Common myeloid progenitor, CD34-positive (primary cell): ENCODE measurements at regions of chr3 and their contacts with region 1.

Region 1: DNA sequence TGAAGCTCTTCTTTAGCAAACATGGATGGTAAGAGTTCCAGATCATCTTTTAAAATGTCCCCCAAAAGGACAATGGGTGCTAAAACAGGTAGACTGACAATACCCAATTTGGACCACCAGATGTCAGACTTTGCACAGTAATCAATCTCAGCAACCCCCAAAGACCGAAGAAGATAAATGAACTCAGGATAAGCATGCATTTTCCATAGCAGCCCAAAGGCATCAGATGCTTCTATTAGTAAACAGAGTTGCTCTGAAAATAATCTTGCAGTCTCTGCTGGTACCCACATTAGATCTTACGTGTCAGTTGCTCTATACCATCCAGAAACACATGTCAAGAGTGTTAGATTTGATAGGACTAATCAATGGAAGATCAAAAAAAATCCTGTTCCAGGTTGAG is 20.6 kb downstream of the MYH15 start:
- DNase-seq: peak; percentile 64 to 84 (median 75)
- H3K4me3 ChIP-seq: no peak overlapping the region
- H3K27ac ChIP-seq: no peak overlapping the region
- H3K4me1 ChIP-seq: peaks cover 0 to 9% (median 1%) of the 10 kb centered on the region in 4 experiments
- H3K27me3 ChIP-seq: no peaks in the 10 kb centered on the region

Region 2: GRCh38 chr3:108342837-108343478 is 146.8 kb before region 1 on chr3:
- CTCF ChIA-PET with region 1: no interaction called
- POLR2A ChIA-PET with region 1: no interaction called
- DNase-seq: no peak
- H3K4me3 ChIP-seq: no peak overlapping the region
- H3K27ac ChIP-seq: no peak overlapping the region
- H3K4me1 ChIP-seq: peaks cover 0 to 8% (median 1%) of the 10 kb centered on the region in 4 experiments
- H3K27me3 ChIP-seq: no peaks in the 10 kb centered on the region

Region 3: DNA sequence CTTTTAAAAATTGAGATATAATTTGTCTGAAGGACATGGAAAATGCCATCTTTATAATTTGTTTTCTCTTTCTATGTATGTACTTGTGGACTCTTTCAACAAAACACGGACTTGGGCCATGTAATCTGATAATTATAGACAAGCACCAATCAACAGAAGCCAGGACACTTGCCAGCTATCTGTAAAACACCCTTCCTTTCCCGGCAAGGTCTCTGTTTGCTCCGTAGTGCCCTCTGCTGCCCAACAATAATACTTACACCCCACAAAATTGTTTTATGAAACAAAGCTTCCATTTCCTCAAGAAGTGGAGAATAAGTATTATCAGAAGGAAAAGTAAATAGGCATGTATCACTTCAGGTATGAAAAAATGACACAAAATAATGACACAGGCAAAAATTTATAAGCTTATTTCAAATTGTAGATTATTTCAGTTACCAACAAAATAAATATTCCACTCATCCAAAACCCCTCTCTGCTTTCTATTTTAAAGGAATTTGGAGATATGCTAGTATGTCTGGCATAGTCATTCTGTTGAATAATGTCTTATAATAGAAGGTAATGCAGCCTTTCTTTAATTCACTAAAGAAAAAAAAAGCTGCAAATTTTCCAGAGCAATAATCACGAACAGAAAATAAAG is 12.1 kb before region 1 on chr3:
- CTCF ChIA-PET with region 1: interaction called, 46 read pairs
- POLR2A ChIA-PET with region 1: no interaction called
- DNase-seq: peak; percentile 70 to 81 (median 77)
- H3K4me3 ChIP-seq: no peak overlapping the region
- H3K27ac ChIP-seq: no peak overlapping the region
- H3K4me1 ChIP-seq: no peaks in the 10 kb centered on the region
- H3K27me3 ChIP-seq: no peaks in the 10 kb centered on the region

Region 4: GRCh38 chr3:108538083-108538482 is 48.3 kb after region 1 on chr3:
- CTCF ChIA-PET with region 1: interaction called, 24 read pairs
- POLR2A ChIA-PET with region 1: no interaction called
- DNase-seq: no peak
- H3K4me3 ChIP-seq: no peak overlapping the region
- H3K27ac ChIP-seq: no peak overlapping the region
- H3K4me1 ChIP-seq: no peaks in the 10 kb centered on the region
- H3K27me3 ChIP-seq: no peaks in the 10 kb centered on the region

Region 5: GRCh38 chr3:108546247-108546646 is 56.5 kb after region 1 on chr3:
- CTCF ChIA-PET with region 1: interaction called, 117 read pairs
- POLR2A ChIA-PET with region 1: no interaction called
- DNase-seq: no peak
- H3K4me3 ChIP-seq: peak overlapping the region in 2 of 7 experiments; percentile 4 to 63
- H3K27ac ChIP-seq: peak overlapping the region in 1 of 2 experiments; percentile 11
- H3K4me1 ChIP-seq: peaks cover 0 to 2% (median 0%) of the 10 kb centered on the region in 4 experiments
- H3K27me3 ChIP-seq: no peaks in the 10 kb centered on the region

Region 6: DNA sequence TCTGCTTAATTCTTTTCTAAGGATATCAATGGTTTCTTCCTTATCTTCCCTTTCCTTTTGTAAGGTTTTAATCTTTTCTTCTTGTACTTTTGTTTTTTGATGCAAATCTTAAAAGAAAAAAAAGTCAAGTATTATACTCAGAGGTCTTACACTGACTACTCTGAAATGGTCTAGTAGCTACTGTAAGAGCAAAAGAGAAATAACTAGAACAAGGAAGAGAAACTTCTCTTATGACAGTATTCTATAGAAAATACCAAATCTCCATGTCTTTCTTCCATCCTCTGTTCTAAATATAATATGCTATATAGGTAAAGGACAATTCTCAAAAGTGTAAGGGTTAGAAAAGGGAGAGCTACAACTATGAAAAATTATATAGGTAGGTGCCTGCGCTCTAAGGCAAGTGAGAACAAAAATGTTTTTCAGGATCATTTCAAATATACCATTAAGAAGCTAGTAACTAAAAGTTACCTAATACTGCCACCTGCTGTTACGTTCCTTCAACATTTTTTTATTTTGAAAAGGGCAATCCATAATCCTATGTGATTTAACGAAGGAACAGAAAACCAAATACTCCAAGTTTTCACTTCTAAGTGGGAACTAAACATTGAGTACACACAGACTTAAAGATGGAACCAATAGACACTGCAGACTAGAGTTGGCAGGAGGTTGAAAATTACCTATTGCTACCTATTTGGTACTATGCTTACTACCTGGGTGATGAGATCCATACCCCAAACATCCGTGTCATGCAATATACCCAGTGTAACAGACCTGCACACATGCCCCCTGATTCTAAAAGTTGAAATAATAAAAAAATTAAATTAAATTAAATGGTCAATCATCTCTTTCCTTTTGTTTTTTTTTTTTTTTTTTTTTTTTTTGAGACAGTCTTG is 62.7 kb after region 1 on chr3:
- CTCF ChIA-PET with region 1: interaction called, 117 read pairs
- POLR2A ChIA-PET with region 1: no interaction called
- DNase-seq: peak; percentile 63 to 79 (median 70)
- H3K4me3 ChIP-seq: no peak overlapping the region
- H3K27ac ChIP-seq: no peak overlapping the region
- H3K4me1 ChIP-seq: no peaks in the 10 kb centered on the region
- H3K27me3 ChIP-seq: no peaks in the 10 kb centered on the region